ENCODE measurements at regions of chr11 and their contacts with region 1.

Region 1: DNA sequence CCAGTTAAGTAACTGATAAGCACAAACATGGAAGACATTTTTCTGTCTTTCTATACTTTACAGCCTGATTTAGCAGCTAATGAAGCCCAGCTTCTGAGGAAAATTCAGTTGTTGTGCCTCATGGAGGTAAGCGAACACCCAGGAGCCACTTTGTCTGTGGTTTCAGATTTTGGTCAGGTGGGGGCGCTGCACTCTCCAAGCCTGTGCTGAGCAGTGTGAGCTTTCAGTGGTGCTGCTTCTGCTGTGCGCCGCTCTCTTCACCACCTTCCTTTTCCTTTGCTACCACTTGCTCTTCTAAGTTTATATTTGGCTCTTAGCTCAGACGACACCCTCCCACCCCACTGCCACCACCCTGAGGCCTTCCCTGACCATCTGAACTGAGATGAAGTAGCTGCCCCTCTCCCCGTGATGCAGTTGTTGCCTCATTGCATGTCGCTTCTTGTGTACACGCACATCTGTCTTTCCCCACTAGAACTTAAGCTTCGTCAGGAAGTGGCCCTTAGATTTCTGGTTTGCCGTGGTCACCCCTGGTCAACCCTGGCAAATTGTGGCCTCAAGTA is 14.0 kb downstream of the PSMD13 start:
- DNase-seq: peak; percentile 91
- H3K4me3 Mint-ChIP-seq: no peak overlapping the region
- H3K27ac Mint-ChIP-seq: peak overlapping the region; percentile 78
- H3K4me1 Mint-ChIP-seq: peaks cover 16% of the 10 kb centered on the region
- H3K27me3 Mint-ChIP-seq: no peaks in the 10 kb centered on the region

Region 2: GRCh38 chr11:236774-237767 is 13.7 kb before region 1 on chr11 and contains the start of gene PSMD13:
- CTCF ChIA-PET with region 1: interaction called, 24 read pairs
- DNase-seq: peak; percentile 92
- H3K4me3 Mint-ChIP-seq: peak within 1 kb of the TSS; percentile 94
- H3K27ac Mint-ChIP-seq: peak within 1 kb of the TSS; percentile 98
- H3K4me1 Mint-ChIP-seq: peaks cover 44% of the 10 kb centered on the region
- H3K27me3 Mint-ChIP-seq: no peaks in the 10 kb centered on the region

Region 3: DNA sequence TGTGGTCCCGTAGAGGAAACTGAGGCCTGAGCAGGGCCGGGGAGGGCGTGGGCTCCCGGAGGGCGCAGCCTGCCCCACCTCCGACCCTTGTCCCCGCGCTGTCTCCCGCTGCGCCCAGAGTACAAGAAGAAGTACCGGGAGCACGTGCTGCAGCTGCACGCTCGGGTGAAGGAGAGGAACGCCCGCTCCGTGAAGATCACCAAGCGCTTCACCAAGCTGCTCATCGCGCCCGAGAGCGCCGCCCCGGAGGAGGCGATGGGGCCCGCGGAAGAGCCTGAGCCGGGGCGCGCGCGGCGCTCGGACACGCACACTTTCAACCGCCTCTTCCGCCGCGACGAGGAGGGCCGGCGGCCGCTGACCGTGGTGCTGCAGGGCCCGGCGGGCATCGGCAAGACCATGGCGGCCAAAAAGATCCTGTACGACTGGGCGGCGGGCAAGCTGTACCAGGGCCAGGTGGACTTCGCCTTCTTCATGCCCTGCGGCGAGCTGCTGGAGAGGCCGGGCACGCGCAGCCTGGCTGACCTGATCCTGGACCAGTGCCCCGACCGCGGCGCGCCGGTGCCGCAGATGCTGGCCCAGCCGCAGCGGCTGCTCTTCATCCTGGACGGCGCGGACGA is 29.3 kb after region 1 on chr11:
- CTCF ChIA-PET with region 1: interaction called, 49 read pairs
- DNase-seq: peak; percentile 72
- H3K4me3 Mint-ChIP-seq: peak overlapping the region; percentile 85
- H3K27ac Mint-ChIP-seq: peak overlapping the region; percentile 91
- H3K4me1 Mint-ChIP-seq: peaks cover 63% of the 10 kb centered on the region
- H3K27me3 Mint-ChIP-seq: peaks cover 82% of the 10 kb centered on the region

Region 4: DNA sequence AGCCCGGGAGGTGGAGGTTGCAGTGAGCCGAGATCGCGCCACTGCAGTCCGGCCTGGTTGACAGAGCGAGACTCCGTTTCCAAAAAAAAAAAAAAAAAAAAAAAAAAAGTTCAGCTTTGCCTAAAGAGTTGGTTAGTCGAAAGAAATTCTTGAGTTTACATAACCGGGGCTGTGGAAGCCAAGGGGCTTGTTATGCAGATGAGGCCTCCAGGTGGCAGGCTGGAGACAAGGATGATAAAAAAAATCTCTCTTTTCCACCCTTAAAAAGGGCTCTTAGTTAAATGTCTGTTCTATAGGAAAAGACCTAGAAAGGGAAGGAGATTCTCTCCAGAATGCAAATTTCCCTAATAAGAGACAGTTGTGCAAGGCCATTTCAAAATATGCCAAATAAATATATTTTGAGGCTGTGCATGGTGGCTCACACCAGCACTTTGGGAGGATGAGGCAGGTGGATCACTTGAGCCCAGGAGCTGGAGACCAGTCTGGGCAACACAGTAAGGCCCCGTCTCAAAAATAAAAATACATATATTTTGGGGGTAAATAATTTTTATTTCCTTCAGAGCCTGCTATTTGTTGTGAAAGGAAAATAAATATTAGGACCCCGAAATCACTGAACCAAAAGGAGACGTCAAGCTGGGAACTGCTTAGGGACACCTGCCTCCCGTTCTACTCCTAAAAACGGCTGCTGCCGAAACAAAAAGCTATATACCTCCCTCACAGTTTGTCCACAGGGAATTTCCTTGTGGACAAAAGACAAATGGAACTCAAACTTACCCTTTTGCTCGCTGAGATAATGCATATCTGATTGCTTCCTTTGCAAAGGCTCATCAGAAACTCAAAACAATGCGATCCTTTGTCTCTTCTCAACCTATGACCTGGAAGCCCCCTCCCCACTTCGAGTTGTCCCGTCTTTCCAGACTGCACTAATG is 54.4 kb after region 1 on chr11:
- CTCF ChIA-PET with region 1: interaction called, 36 read pairs
- DNase-seq: peak; percentile 82
- H3K4me3 Mint-ChIP-seq: no peak overlapping the region
- H3K27ac Mint-ChIP-seq: no peak overlapping the region
- H3K4me1 Mint-ChIP-seq: peaks cover 52% of the 10 kb centered on the region
- H3K27me3 Mint-ChIP-seq: peaks cover 32% of the 10 kb centered on the region

Region 5: DNA sequence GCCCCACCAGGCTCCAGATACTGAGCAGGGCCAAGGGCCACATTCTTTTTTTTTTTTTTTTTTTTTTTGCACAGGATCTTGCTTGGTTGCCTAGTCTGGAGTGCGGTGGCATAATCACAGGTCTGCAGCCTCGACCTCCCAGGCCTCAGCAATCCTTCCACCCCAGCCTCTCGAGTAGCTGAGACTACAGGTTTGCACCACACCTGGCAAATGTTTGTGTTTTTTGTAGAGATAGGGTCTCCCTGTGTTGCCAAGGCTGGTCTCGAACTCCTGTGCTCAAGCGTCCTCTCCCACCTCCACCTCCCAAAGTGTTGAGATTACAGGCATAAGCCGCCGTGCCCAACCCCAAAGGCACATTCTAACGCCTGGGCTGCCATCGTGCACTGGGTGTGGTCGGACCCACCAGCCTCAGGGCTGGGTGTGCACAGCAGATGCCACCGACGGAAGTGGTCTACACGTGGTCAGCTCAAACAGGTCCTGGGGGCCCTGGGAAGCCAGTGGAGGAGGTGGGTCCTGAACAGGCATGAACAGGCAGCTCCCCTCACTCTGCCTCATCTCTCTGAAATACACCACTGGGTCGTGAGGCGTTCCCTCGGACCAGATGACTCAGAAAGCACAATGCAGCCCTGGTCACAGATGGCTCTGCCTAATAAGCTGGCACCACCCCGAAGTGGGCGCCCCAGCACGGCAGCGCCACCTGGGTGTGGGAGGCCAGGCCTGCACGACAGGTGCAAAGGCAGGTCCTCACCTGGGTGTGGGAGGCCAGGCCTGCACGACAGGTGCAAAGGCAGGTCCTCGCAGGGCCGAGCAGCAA is 113.3 kb after region 1 on chr11:
- CTCF ChIA-PET with region 1: interaction called, 32 read pairs
- DNase-seq: peak; percentile 68
- H3K4me3 Mint-ChIP-seq: no peak overlapping the region
- H3K27ac Mint-ChIP-seq: no peak overlapping the region
- H3K4me1 Mint-ChIP-seq: peaks cover 8% of the 10 kb centered on the region
- H3K27me3 Mint-ChIP-seq: peaks cover 69% of the 10 kb centered on the region